Prostate gland (tissue), 2 donors: ENCODE measurements at regions of chr17 and their contacts with region 1.

Region 1: GRCh38 chr17:794876-795275 is 12.7 kb downstream of the MRM3 start:
- DNase-seq: peak; percentile 89
- H3K4me3 ChIP-seq: no peak overlapping the region
- H3K27ac ChIP-seq: peak overlapping the region; percentile 37 to 71
- H3K4me1 ChIP-seq: no peaks in the 10 kb centered on the region
- H3K27me3 ChIP-seq: no peaks in the 10 kb centered on the region
- CTCF ChIP-seq: peak; percentile 67 to 98 (median 92)
- POLR2A ChIP-seq: no peak

Region 2: GRCh38 chr17:704111-704864 is 90.6 kb before region 1 on chr17:
- intact Hi-C with region 1: no loop called
- DNase-seq: no peak
- H3K4me3 ChIP-seq: no peak overlapping the region
- H3K27ac ChIP-seq: no peak overlapping the region
- H3K4me1 ChIP-seq: no peaks in the 10 kb centered on the region
- H3K27me3 ChIP-seq: no peaks in the 10 kb centered on the region
- CTCF ChIP-seq: no peak
- POLR2A ChIP-seq: no peak

Region 3: GRCh38 chr17:846901-847843 is 52.3 kb after region 1 on chr17:
- intact Hi-C with region 1: loop called (anchors 5 kb)
- DNase-seq: peak; percentile 50
- H3K4me3 ChIP-seq: peak overlapping the region; percentile 15 to 19
- H3K27ac ChIP-seq: peak overlapping the region; percentile 72 to 77
- H3K4me1 ChIP-seq: peaks cover 11% of the 10 kb centered on the region
- H3K27me3 ChIP-seq: no peaks in the 10 kb centered on the region
- CTCF ChIP-seq: no peak
- POLR2A ChIP-seq: no peak

Region 4: DNA sequence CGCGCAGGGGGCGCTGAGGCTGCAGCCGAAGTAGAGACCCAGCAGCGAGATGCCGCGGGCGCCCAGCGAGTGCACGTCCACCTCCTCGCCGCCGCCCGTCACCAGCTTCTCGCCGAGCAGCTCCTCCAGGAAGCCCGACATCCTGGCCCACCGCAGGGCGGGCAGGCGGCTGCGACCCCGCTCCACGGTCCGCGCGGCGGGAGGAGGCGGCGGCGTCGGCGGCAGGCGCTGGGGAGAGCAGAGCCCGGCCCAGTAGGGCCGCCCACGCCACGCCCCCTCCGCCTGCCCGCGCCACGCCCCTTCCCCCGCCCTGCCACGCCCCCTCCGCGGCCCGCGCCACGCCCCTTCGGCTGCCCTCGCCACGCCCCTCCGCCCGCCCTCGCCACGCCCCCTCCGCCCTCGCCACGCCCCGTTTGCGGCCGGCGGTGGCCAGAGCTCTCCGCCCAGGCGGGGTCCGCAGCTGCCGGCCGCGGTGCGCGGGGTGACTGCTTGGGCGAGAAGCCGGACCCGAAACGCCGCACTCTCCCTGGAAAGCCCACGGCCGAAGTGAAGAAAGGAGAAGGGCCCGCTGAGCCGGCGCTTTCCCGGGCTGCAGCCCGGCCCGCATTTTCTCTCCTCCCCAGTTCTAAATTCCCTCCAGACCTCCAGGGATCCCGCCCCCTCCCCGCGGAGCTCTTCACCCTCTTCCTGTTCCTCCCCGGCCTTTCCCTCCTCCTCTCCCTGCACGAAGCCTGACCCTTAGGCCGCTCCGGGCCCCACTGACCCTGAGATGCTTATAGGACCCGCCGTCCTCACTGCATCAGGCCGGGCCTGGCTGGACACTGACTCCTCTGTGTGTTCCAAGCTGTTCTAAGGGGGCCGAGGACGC is 184.9 kb after region 1 on chr17 and contains the start of gene NXN:
- intact Hi-C with region 1: loop called (anchors 2 kb)
- DNase-seq: peak; percentile 87
- H3K4me3 ChIP-seq: peak within 1 kb of the TSS; percentile 56 to 80
- H3K27ac ChIP-seq: peak within 1 kb of the TSS; percentile 83 to 93
- H3K4me1 ChIP-seq: peaks cover 7% of the 10 kb centered on the region
- H3K27me3 ChIP-seq: no peaks in the 10 kb centered on the region
- CTCF ChIP-seq: peak in 2 of 4 experiments; percentile 43 to 45
- POLR2A ChIP-seq: peak; percentile 86
- total RNA-seq, gene NXN: 56.2 to 56.7 TPM

Region 5: DNA sequence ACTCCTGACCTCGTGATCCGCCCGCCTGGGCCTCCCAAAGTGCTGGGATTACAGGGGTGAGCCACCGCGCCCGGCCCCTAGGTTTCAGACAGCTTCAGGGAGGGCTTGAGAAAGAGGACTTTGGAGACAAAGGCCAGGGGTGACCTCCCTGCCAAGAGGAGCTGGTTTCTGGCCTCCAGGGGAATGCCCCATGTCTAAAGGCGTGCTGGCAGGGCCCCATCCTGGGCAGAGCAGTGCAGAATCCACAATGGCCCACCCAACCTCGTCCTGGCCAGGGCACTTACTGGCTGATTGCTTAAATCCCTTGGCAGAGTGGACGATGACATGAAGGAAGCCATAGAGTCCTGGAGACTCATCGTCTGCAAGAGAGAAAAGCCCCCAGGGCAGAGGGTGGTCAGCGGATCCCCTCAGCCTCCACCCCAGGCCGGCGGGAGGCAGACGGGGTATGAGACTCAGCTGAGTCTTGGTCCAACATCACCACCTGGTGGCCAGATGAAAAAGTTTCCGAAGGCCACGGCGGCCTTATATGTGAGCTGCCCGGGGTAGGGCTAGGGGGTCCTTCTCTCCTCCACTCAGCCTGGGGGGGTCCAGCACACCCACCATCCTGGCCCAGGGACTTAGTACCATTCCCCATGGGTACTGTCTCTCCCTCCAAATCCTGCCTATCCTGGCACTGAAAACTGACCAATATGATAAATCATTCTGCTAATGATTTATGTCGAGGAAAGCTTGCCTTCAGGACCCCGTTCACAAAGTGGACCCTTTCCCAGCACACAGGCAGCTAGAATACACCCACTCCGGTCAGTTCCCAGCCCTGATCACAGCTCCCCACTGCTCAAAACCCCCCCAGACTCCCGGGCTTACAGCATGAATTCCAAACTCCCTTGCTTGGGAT is 261.1 kb after region 1 on chr17:
- intact Hi-C with region 1: loop called (anchors 5 kb)
- DNase-seq: peak; percentile 64
- H3K4me3 ChIP-seq: no peak overlapping the region
- H3K27ac ChIP-seq: peak overlapping the region; percentile 36 to 70
- H3K4me1 ChIP-seq: peaks cover 6% of the 10 kb centered on the region
- H3K27me3 ChIP-seq: no peaks in the 10 kb centered on the region
- CTCF ChIP-seq: peak; percentile 64 to 86 (median 78)
- POLR2A ChIP-seq: no peak